Heart right ventricle (tissue), 16 donors: ENCODE measurements at regions of chr2 and their contacts with region 1.

Region 1: GRCh38 chr2:112433932-112434730 is 686 bp upstream of the RGPD8 start:
- DNase-seq: no peak
- ATAC-seq: no peak
- H3K4me3 ChIP-seq: peak overlapping the region in 1 of 10 donors; percentile 61
- H3K27ac ChIP-seq: no peak overlapping the region
- H3K4me1 ChIP-seq: peaks cover 0 to 14% (median 4%) of the 10 kb centered on the region in 9 donors
- H3K27me3 ChIP-seq: peaks cover 0 to 14% (median 4%) of the 10 kb centered on the region in 7 donors
- CTCF ChIP-seq: no peak

Region 2: DNA sequence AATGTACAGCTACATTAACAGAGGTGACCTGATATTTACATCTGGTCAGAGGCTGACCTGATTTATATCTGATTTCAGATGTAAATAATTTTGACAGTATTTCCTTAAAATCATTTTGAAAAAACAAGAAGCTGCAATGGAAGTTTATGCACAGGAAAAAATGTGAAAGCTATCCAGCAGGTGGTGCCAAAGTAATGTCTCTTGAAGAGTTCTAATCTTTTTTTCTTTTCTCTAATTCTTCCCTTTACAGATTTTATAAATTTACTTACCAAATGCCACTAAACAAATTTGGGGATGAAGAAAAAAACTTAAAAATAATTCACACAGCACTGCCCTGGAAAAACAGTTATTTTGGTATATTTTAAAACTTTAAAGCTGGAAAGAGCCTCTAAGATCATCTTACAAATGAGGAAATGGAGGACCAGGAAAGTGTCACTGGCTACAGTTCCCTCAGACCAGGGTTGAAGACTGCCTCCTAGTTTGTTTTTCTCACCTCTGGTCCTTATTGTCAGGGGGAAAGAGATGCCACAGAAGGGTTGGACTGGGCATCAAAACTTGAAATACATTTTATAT is 312.4 kb before region 1 on chr2:
- intact Hi-C with region 1: loop called in 3 of 10 experiments (anchors 5 to 10 kb)
- DNase-seq: no peak
- ATAC-seq: no peak
- H3K4me3 ChIP-seq: no peak overlapping the region
- H3K27ac ChIP-seq: no peak overlapping the region
- H3K4me1 ChIP-seq: no peaks in the 10 kb centered on the region
- H3K27me3 ChIP-seq: no peaks in the 10 kb centered on the region
- CTCF ChIP-seq: peak; percentile 38 to 74 (median 66)

Region 3: DNA sequence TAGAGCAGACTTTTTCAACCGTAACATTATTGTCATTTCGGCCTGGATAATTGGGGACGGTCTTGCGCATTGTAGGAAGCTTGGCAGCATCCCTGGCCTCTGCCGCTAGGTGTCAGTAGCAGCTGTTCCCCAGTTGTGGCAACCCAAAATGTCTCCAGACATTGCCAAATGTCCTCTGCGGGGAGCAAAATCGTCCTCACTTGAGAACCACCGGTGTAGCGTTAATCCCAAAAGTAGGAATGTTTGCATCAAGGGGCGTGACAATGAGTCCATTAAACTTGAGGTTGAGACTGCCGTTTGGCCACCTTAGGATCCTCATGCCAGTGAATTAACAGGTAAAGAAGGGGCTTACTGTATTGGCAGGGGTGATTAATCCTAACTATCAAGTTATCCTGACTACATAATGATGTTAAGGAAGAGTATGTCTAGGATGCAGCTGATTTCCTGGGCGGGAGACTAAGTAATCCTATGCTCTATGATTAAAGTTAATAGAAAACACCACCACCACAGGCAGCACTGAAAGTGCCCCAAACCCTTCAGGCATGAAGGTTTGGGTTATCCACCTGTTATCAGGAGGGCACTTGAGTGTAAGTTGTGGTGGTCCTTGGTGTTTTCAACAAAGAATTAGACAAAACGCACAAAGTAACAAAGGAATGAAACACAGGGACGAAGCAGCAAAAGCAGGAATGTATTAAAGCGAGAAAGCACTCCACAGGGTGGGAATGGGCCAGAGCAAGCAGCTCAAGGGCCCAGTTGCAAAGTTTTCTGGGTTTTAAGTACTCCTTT is 174.4 kb before region 1 on chr2:
- intact Hi-C with region 1: loop called in 4 of 10 experiments (anchors 2 to 10 kb)
- DNase-seq: peak; percentile 80 to 86
- ATAC-seq: peak; percentile 21 to 77 (median 66)
- H3K4me3 ChIP-seq: peak overlapping the region in 4 of 10 donors; percentile 1 to 36 (median 24)
- H3K27ac ChIP-seq: peak overlapping the region in 1 of 10 donors; percentile 26
- H3K4me1 ChIP-seq: peaks cover 0 to 24% (median 6%) of the 10 kb centered on the region in 9 donors
- H3K27me3 ChIP-seq: no peaks in the 10 kb centered on the region
- CTCF ChIP-seq: peak; percentile 90 to 98 (median 95)